RWPE1 (cell line): ENCODE measurements at regions of chr5 and their contacts with region 1.

Region 1: DNA sequence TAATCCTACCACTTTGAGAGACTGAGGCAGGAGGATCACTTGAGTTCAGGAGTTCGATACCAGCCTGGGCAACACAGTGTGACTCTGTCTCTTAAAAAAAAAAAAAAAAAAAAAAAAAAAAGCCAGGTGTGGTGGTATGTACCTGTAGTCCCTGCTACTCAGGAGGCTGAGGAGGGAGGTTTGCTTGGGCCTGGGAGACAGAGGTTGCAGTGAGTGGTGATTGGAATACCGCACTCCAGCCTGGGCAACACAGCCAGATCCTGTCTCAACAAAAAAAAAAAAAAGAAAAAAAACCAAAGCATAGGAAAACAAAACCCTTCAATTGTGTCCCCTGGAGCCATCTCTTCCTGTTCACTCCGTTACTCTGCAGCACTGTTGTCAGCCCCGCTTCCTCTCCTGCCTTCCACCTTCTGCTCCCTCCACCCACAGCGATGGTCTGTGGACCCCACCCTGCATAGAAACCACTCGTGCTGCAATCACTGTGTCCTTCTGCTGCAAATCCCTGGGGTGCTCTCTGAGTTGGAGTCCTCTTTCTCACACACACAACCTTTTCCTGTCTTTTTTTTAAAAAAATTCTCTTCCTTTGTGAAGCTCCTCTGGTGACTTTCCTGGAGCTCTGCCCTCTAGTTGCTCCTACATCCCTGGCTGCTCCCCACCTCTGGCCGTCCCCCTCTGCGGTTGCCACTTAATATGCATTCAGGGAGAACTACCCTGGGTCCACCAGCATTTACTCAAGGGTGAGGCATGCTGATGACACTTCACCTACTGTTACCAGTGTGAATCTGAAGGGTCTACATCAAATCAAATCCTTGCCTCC is 22.2 kb downstream of the CCT5 start:
- DNase-seq: no peak
- H3K27ac ChIP-seq: no peak overlapping the region
- CTCF ChIP-seq: no peak

Region 2: GRCh38 chr5:8417316-8418048 is 1854.8 kb before region 1 on chr5:
- CTCF ChIA-PET with region 1: interaction called, 10 read pairs
- POLR2A ChIA-PET with region 1: no interaction called
- DNase-seq: no peak
- H3K27ac ChIP-seq: no peak overlapping the region
- CTCF ChIP-seq: no peak